ENCODE measurements at regions of chr13 and their contacts with region 1.

Region 1: DNA sequence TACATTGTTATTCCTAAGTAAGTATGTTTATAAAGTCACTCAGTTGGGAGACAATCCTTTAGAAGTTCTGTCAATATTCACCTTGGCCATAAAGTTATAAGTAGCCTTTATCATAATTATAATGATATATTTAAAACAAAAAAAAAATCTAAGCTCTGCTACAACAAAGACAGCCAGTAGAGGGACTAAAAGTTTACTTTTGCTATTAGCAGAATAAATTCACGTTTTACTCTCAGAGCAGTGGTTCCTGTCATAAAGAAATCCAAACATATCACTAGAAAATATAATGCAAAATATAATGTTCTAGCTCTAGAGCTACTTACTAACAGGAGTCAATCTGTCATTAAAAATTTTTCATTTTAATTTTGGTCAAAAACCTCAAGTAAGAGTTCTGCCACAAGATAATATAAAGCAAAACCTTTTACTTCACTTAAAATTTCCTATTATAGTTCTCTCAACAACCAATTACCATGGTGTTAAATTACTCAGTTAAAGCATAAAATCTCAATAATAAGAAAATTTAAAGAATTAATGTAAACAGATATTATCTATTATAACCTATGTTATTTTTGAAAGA is 17.7 kb downstream of the INTS6 start:
- DNase-seq: peak; percentile 50
- H3K4me3 ChIP-seq: no peak overlapping the region
- H3K27ac ChIP-seq: no peak overlapping the region
- H3K4me1 ChIP-seq: peaks cover 55% of the 10 kb centered on the region
- H3K27me3 ChIP-seq: no peaks in the 10 kb centered on the region
- CTCF ChIP-seq: peak; percentile 71

Region 2: GRCh38 chr13:51125498-51126226 is 309.4 kb before region 1 on chr13:
- CTCF ChIA-PET with region 1: no interaction called
- POLR2A ChIA-PET with region 1: no interaction called
- intact Hi-C with region 1: loop called (anchors 10 kb)
- DNase-seq: peak; percentile 80
- H3K4me3 ChIP-seq: no peak overlapping the region
- H3K27ac ChIP-seq: no peak overlapping the region
- H3K4me1 ChIP-seq: no peaks in the 10 kb centered on the region
- H3K27me3 ChIP-seq: no peaks in the 10 kb centered on the region
- CTCF ChIP-seq: peak; percentile 93

Region 3: DNA sequence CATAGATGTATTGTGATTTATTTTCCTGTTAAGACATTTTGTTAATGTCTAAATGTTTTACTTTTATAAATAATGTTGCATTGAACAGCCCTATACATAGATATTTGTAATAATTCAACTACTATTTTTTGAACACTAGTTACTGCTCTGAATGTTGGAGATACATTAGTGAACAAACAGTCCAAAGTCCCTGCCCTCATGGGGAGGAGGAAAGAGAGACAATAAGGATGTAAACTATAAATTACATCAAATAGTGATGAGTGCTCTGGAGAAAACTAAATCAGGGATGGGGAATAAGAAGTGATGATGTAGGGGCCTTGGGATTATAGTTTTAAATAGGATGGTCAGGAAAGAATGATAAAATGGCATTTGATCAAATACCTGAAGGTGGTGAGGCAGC is 30.0 kb after region 1 on chr13:
- CTCF ChIA-PET with region 1: no interaction called
- POLR2A ChIA-PET with region 1: no interaction called
- intact Hi-C with region 1: no loop called
- DNase-seq: no peak
- H3K4me3 ChIP-seq: no peak overlapping the region
- H3K27ac ChIP-seq: no peak overlapping the region
- H3K4me1 ChIP-seq: peaks cover 4% of the 10 kb centered on the region
- H3K27me3 ChIP-seq: no peaks in the 10 kb centered on the region
- CTCF ChIP-seq: no peak

Region 4: GRCh38 chr13:51781246-51782022 is 346.3 kb after region 1 on chr13:
- CTCF ChIA-PET with region 1: no interaction called
- POLR2A ChIA-PET with region 1: no interaction called
- intact Hi-C with region 1: loop called (anchors 5 kb)
- DNase-seq: peak; percentile 51
- H3K4me3 ChIP-seq: no peak overlapping the region
- H3K27ac ChIP-seq: no peak overlapping the region
- H3K4me1 ChIP-seq: peaks cover 23% of the 10 kb centered on the region
- H3K27me3 ChIP-seq: no peaks in the 10 kb centered on the region
- CTCF ChIP-seq: peak; percentile 63

Region 5: DNA sequence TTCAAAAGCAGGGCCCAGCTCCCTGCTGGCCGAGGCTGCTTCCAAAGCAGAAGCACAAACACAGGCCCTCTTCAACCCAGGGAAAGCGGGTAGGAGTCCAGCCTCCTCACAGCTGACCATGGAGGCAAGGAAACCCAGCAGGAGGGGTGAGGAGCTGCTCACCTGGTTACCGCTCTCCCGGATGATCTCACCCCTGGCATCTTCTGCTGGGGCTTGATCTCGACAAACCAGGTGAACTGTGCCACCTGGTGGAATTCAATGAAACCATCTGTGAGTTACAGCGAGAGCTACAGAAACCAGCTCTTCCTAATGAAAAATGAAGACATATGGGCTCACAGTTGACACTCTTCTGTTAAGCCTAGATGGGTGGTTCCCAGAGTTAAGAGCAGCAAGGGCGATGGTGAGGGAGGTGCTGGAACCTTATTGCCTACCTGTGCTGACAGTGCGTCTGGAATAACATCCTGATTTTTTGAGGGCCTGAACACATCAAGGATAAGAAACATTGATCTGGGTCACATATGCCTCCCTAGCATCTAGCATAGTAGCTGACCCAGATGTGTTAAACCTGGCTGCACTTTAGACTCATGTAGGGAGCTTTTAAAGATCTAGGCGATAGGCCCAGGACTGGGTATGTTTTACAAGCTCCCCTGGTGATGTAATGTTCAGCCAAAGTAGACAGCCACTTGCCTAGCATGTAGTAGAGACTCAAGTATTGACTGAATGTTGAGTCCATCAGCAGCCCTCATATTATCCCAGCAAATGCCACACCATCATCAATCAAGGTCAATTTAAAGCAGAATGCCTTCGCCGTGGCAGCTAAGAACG is 362.8 kb after region 1 on chr13:
- CTCF ChIA-PET with region 1: interaction called, 10 read pairs
- POLR2A ChIA-PET with region 1: no interaction called
- intact Hi-C with region 1: loop called (anchors 5 kb)
- DNase-seq: peak; percentile 63
- H3K4me3 ChIP-seq: no peak overlapping the region
- H3K27ac ChIP-seq: no peak overlapping the region
- H3K4me1 ChIP-seq: peaks cover 13% of the 10 kb centered on the region
- H3K27me3 ChIP-seq: no peaks in the 10 kb centered on the region
- CTCF ChIP-seq: peak; percentile 58

Measured in A673 (cell line).